GM10248 (cell line): ENCODE measurements at regions of chr10 and their contacts with region 1.

Region 1: DNA sequence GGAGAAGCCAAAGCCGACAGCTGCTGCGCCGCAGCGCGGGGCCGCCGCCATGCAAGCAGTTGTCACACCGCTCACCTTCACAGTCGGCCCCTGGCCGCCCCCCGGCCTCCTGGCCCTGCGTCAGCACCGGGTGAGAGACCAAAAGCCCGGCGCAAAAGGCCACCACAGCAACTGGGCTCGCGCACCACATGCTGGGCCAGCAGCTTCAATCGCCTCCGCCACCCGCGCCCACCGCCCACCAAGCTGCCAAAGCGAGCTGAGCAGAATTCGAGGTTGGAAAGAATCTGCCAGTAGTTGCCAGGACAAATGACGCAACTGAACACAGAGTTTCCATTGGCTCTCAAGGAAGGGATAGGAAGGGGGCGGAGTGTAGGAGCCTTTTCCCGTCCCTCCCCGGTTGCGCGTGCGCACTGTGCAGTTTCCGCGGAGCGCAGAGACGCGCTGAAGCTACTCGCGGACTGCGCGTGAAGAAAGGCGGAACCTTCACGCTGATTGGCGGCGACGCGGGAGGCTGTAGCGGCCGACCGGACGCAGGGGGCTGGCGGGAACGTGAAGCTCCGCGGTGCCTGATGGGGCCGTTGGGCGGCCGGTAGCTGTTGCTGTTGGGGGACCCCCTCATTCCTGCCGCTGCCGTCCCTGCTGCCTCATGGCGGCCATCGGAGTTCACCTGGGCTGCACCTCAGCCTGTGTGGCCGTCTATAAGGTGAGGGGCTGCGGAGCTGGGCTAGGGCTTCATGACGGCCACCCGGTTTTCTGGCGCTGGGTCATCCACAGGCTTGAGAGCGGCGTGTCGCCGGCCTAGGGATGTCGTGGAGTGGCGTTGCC is at the starts of genes CDNF, HSPA14 and MSANTD7:
- DNase-seq: peak; percentile 99
- CTCF ChIP-seq: no peak

Region 2: DNA sequence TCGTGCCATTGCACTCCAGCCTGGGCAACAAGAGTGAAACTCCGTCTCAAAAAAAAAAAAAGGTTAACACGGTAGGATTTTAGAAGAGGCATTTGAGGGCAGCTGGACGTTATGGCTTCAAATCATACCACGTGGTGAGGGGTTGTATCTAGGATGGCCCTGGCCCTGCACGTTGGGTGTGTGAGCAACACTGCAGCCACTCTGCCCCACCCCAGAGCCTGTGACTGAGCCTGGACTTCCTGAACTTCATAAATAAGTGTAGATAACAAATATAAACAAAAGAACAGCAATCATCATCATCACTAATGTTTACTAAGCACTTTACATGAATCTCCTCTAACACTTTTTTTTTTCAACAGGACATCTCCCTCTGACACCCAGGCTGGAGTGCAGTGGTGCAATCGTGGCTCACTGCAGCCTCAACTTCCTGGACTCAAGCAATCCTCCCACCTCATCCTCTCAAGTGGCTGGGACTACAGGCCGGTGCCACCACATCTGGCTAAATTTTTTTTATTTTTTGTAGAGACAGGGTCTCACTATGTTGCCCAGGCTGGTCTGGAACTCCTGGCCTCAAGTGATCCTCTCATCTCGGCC is 337.7 kb before region 1 on chr10:
- CTCF ChIA-PET with region 1: interaction called, 16 read pairs
- POLR2A ChIA-PET with region 1: no interaction called
- DNase-seq: no peak
- CTCF ChIP-seq: no peak

Region 3: DNA sequence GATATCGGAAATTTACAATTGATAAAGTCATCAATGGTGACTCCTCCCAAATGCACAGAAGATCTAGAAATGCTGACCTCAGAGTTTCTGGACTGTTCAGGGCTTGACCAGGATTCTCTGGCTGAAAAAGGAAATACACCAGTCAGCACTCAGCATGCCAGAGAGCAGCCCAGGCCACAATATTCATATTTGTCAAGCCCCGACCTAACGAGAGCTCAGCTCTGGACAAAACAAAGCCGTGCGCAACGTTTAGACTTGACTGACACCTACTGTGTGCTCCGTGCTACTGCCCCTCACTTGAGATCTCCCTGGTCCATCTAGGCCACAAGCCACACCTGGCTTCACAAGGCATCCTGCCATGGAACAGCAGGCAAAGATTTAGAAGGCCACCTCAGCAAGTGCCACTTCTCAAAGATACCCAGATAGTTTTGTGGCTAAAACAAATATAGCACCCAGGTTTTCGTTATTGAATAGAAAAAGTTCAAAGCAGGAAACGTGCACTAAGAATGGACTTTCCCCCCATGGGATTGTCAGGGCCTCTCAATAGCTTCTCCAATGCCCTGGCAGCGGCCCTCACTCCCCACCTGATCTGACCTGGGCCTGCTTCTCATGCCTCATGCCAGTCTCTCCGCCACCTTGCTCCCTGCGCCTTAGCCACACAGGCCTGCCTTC is 281.5 kb before region 1 on chr10:
- CTCF ChIA-PET with region 1: no interaction called
- POLR2A ChIA-PET with region 1: interaction called, 11 read pairs
- DNase-seq: peak; percentile 69
- CTCF ChIP-seq: peak; percentile 39

Region 4: GRCh38 chr10:14822879-14823755 is 14.9 kb before region 1 on chr10:
- CTCF ChIA-PET with region 1: interaction called, 15 read pairs
- POLR2A ChIA-PET with region 1: no interaction called
- DNase-seq: peak; percentile 58
- CTCF ChIP-seq: peak; percentile 77

Region 5: DNA sequence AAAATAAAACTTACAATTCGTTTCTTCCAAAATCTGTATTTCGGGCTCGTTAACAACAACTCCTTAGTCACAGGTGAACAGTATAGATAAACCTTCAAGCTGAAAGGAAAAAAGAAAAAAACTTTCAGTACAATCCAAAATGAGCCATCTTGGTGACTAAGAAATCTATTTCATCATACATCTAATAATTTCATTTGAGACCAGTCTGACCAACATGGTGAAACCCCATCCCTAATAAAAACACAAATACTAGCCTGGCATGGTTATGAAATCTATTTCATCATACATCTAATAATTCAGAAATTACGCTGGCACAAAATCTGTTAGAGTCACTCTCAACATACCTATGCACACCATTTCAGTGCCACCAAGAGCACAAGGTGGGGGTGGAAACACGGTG is 107.1 kb after region 1 on chr10:
- CTCF ChIA-PET with region 1: no interaction called
- POLR2A ChIA-PET with region 1: no interaction called
- DNase-seq: no peak
- CTCF ChIP-seq: no peak